IMR-90 (cell line): ENCODE measurements at regions of chr12 and their contacts with region 1.

Region 1: GRCh38 chr12:132489602-132490239 is at the start of gene FBRSL1:
- DNase-seq: peak; percentile 80
- ATAC-seq: peak; percentile 93
- H3K4me3 ChIP-seq: peak within 1 kb of the TSS; percentile 91
- H3K27ac ChIP-seq: peak within 1 kb of the TSS; percentile 17; the same call in 1 of the 2 replicates
- H3K4me1 ChIP-seq: peaks cover 13% of the 10 kb centered on the region; the same call in 1 of the 2 replicates
- H3K27me3 ChIP-seq: peaks cover 3% of the 10 kb centered on the region
- CTCF ChIP-seq: no peak
- POLR2A ChIP-seq: no peak
- RAD21 ChIP-seq: no peak
- total RNA-seq, gene FBRSL1: 0.36 and 0.83 TPM in 2 replicates

Region 2: GRCh38 chr12:132560614-132561426 is 71.1 kb after region 1 on chr12:
- CTCF ChIA-PET with region 1: no interaction called
- POLR2A ChIA-PET with region 1: no interaction called
- dilution Hi-C with region 1: no loop called
- in situ Hi-C with region 1: no loop called
- intact Hi-C with region 1: loop called (anchors 2 kb)
- DNase-seq: peak; percentile 51
- ATAC-seq: peak; percentile 50
- H3K4me3 ChIP-seq: peak overlapping the region; percentile 93
- H3K27ac ChIP-seq: no peak overlapping the region; the same call in 1 of the 2 replicates
- H3K4me1 ChIP-seq: no peaks in the 10 kb centered on the region; the same call in 1 of the 2 replicates
- H3K27me3 ChIP-seq: no peaks in the 10 kb centered on the region
- CTCF ChIP-seq: peak; percentile 66
- POLR2A ChIP-seq: no peak
- RAD21 ChIP-seq: peak; percentile 52

Region 3: DNA sequence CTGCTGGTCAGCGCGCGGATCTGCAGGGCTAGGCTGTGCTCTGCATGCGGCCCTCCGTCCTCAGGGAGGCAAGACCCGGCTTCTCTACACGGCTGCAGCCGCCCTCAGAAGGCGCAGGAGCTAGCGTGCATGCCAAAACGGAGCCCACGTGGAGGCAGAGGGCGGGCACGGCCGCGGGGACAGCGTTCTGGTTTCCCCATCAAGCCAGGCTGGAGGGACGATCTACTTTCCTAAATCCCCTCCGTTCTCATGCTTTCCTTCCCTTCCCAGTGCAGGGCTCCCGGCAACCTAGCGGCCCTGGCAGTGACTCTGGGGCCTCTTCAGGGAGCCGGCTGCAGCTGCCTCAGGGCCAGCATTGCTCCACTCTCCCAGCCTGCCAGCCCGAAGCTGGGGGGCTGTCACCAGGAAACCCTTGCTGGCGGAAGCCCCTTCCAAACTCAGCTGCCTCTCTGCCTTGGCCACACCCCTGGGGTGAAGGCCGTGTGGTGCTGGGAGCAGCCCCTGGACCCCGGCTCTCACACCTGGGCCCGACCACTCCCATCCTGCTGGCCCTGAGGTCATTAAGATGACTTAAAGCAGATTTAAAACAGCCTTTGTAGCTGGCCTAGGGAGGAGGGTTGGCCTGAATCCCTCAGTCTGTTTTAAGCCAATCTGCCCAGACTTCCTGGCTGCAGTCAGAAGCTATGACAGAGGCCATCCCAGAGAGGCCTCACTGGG is 348.1 kb after region 1 on chr12:
- CTCF ChIA-PET with region 1: no interaction called
- POLR2A ChIA-PET with region 1: no interaction called
- dilution Hi-C with region 1: no loop called
- in situ Hi-C with region 1: no loop called
- intact Hi-C with region 1: no loop called
- DNase-seq: no peak
- ATAC-seq: peak; percentile 21
- H3K4me3 ChIP-seq: no peak overlapping the region
- H3K27ac ChIP-seq: no peak overlapping the region
- H3K4me1 ChIP-seq: no peaks in the 10 kb centered on the region
- H3K27me3 ChIP-seq: no peaks in the 10 kb centered on the region
- CTCF ChIP-seq: no peak
- POLR2A ChIP-seq: no peak
- RAD21 ChIP-seq: no peak